Mammary epithelial cell (primary cell): ENCODE measurements at regions of chr15 and their contacts with region 1.

Region 1: GRCh38 chr15:92930776-92931175 is 30.7 kb downstream of the CHD2 start:
- DNase-seq: peak; percentile 69
- H3K4me3 ChIP-seq: no peak overlapping the region
- H3K27ac ChIP-seq: no peak overlapping the region
- H3K4me1 ChIP-seq: peaks cover 9% of the 10 kb centered on the region
- H3K27me3 ChIP-seq: no peaks in the 10 kb centered on the region
- CTCF ChIP-seq: no peak

Region 2: DNA sequence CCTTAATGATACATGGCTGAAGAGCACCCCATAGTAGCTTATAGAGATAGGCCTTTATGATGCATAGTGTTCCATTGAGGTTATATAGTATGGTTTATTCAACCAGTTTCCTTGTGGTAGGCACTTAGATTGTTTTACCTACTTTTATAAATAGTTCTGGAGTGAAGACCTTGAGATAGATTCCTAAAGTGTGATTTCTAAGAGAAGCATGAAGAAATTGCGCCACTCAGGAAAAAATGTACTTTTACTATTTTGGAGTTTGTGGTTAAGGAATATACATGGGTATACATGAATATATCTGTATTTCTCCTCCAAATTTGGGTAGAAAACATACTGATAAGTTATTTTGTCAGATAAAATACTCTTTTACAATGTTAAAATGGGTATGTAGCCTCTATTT is 39.9 kb after region 1 on chr15:
- CTCF ChIA-PET with region 1: no interaction called
- dilution Hi-C with region 1: no loop called
- in situ Hi-C with region 1: no loop called
- intact Hi-C with region 1: loop called (anchors 5 kb)
- DNase-seq: no peak
- H3K4me3 ChIP-seq: no peak overlapping the region
- H3K27ac ChIP-seq: no peak overlapping the region
- H3K4me1 ChIP-seq: no peaks in the 10 kb centered on the region
- H3K27me3 ChIP-seq: no peaks in the 10 kb centered on the region
- CTCF ChIP-seq: no peak

Region 3: DNA sequence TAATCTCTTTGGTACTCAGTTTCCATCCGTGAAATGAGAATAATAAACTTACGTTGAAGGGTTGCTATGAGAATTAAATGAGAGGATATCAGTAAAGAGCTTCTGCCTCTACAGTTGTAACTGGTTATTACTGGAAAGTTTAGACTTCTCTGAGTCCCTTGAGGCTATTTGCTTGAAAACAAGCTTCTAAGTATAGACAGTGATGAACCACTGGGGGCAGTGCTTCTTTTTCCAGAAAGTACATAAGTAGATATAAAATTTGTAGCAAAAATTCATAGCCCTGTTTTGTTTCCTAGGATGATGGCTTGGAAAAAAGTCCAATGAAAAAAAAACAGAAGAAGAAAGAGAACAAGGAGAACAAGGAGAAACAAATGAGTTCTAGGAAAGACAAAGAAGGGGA is 71.1 kb after region 1 on chr15:
- CTCF ChIA-PET with region 1: no interaction called
- dilution Hi-C with region 1: no loop called
- in situ Hi-C with region 1: loop called in 1 of 2 experiments (anchors 10 kb)
- intact Hi-C with region 1: no loop called
- DNase-seq: no peak
- H3K4me3 ChIP-seq: no peak overlapping the region
- H3K27ac ChIP-seq: no peak overlapping the region
- H3K4me1 ChIP-seq: no peaks in the 10 kb centered on the region
- H3K27me3 ChIP-seq: no peaks in the 10 kb centered on the region
- CTCF ChIP-seq: peak; percentile 13 to 29

Region 4: DNA sequence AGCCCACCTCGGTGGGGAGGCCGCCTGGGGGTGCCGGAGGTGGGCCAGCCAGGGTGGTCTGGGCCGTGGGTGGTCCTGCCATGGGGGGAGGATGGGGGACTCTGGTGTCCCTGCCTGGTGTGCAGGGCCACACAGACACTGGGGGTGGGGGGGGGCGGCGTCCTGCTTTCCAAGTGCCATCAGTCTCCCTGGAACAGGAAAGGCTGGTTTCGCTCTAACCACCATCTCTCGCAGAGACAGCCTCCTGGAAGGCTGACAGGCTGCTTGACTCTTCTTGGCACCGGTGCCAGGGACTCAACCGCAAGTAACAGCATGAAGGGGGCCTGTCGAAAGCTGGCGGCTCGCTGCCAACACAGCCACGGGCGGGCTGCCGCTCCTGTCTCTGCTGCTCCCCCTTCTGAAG is 118.0 kb after region 1 on chr15:
- CTCF ChIA-PET with region 1: no interaction called
- dilution Hi-C with region 1: no loop called
- in situ Hi-C with region 1: no loop called
- intact Hi-C with region 1: no loop called
- DNase-seq: peak; percentile 55
- H3K4me3 ChIP-seq: no peak overlapping the region
- H3K27ac ChIP-seq: no peak overlapping the region
- H3K4me1 ChIP-seq: peaks cover 7% of the 10 kb centered on the region
- H3K27me3 ChIP-seq: no peaks in the 10 kb centered on the region
- CTCF ChIP-seq: no peak